Dendritic cell treated with granulocyte-macrophage colony-stimulating factor and Interleukin-4, amounts not matched to agents 40 ng/mL and 50 ng/mL, for 4 days (primary cell): ENCODE measurements at regions of chr12 and their contacts with region 1.

Region 1: DNA sequence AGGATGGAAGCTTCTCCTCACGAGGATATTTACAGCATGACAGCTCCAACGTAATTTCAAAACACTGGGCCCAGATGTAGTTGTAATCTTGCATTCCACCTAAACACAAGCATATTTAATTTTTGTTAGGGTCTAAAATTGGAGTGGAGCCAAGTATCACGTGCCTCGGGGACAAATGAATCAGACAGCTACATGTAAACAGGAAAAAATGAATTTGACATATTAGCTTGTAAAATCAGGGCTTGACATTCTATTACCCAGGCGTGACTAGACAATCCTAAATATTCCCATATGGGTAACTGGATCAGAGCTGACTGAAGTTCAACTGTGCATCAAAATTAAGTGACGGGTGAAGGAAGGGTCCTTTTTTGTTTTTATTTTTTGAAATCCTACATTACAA is 59.0 kb downstream of the MDM2 start:
- H3K4me3 Mint-ChIP-seq: no peak overlapping the region
- H3K27ac Mint-ChIP-seq: no peak overlapping the region
- H3K4me1 Mint-ChIP-seq: no peaks in the 10 kb centered on the region
- H3K27me3 Mint-ChIP-seq: no peaks in the 10 kb centered on the region

Region 2: DNA sequence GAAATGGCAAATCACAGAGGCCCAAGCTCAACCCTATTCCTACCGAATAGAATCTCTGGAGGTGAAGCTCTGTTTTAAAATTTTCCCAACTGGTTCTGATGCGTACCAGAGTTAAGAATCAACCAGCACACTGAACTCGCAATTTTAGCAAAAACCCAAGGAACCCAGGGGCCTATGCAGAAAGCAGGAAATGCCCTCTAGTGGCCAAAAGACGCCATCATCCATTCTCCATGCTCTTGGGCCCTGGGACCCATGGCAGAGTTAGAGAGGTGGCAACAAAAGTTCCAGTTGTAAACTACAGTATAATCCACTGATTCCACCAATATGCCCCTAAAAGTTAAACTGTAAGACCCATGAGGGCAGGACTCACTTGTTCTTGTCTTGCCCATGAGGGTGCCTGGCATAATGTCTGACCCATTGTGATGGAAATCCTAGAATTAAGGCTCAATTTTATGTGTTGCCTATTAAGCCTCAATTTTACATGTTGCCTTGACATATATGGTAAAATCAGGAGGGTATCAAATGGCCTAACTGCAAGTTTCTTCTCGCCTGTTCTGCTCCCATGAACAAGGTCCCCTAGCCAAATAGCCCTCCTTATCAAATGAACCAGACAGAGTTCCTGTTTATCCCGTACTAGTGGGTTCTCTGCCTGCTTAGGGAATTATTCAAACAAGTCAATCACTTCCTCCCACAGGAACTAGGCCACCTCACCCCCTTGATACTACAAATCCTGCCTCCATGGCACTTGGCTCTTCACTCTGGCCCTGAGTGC is 203.6 kb after region 1 on chr12:
- intact Hi-C with region 1: loop called (anchors 1 kb)
- H3K4me3 Mint-ChIP-seq: no peak overlapping the region
- H3K27ac Mint-ChIP-seq: peak overlapping the region; percentile 23
- H3K4me1 Mint-ChIP-seq: peaks cover 12% of the 10 kb centered on the region
- H3K27me3 Mint-ChIP-seq: peaks cover 1% of the 10 kb centered on the region

Region 3: GRCh38 chr12:69157023-69157655 is 290.2 kb after region 1 on chr12:
- intact Hi-C with region 1: loop called (anchors 1 kb)
- H3K4me3 Mint-ChIP-seq: peak overlapping the region; percentile 1
- H3K27ac Mint-ChIP-seq: no peak overlapping the region
- H3K4me1 Mint-ChIP-seq: peaks cover 5% of the 10 kb centered on the region
- H3K27me3 Mint-ChIP-seq: peaks cover 2% of the 10 kb centered on the region

Region 4: GRCh38 chr12:69254046-69254445 is 387.1 kb after region 1 on chr12:
- intact Hi-C with region 1: loop called (anchors 10 kb)
- H3K4me3 Mint-ChIP-seq: no peak overlapping the region
- H3K27ac Mint-ChIP-seq: no peak overlapping the region
- H3K4me1 Mint-ChIP-seq: peaks cover 27% of the 10 kb centered on the region
- H3K27me3 Mint-ChIP-seq: no peaks in the 10 kb centered on the region